Heart right ventricle (tissue), 16 donors: ENCODE measurements at regions of chr5 and their contacts with region 1.

Region 1: DNA sequence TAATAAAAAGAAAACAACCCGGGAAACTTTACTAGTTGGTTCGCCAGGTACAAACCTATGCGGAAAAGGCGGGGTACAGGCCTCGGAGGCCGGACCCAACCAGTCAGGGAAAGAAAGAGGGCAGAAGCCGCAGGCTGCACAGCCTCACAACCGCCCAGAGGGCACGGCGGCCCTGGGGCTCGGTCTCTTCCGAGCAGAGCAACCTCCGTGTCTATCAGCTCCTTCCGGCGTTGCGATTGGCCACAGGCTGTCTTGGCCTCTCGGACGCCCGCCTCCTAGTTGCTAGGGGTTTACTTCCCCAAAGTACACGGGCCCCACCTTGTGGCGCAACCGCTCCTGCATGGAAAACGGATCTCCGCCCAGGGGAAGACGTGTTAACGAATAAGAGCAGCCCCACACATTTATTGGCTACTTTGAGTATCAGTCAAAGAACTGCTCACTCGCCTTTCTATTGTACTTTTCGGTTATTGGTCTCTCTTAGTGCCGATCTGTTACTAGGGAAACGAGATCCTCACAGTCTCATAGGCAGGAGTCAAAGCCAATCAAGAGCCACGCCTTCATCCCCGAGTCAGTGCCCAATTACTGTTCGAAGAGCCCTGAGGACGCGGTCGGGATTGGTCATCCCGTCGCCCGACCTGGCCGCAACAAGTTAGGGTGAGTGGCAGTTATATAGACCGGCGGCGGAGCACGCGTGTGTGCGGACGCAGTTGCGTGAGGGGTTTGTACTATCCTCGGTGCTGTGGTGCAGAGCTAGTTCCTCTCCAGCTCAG is at the start of gene G3BP1:
- DNase-seq: peak; percentile 99 to 100
- ATAC-seq: peak; percentile 91 to 96 (median 94)
- H3K4me3 ChIP-seq: peak within 1 kb of the TSS; percentile 79 to 89 (median 82)
- H3K27ac ChIP-seq: peak within 1 kb of the TSS; percentile 94 to 100 (median 98)
- H3K4me1 ChIP-seq: peaks cover 4 to 51% (median 44%) of the 10 kb centered on the region in 9 donors
- H3K27me3 ChIP-seq: no peaks in the 10 kb centered on the region
- CTCF ChIP-seq: peak; percentile 33 to 87 (median 76)
- total RNA-seq, gene G3BP1: 91.8 to 132 (median 116) TPM

Region 2: DNA sequence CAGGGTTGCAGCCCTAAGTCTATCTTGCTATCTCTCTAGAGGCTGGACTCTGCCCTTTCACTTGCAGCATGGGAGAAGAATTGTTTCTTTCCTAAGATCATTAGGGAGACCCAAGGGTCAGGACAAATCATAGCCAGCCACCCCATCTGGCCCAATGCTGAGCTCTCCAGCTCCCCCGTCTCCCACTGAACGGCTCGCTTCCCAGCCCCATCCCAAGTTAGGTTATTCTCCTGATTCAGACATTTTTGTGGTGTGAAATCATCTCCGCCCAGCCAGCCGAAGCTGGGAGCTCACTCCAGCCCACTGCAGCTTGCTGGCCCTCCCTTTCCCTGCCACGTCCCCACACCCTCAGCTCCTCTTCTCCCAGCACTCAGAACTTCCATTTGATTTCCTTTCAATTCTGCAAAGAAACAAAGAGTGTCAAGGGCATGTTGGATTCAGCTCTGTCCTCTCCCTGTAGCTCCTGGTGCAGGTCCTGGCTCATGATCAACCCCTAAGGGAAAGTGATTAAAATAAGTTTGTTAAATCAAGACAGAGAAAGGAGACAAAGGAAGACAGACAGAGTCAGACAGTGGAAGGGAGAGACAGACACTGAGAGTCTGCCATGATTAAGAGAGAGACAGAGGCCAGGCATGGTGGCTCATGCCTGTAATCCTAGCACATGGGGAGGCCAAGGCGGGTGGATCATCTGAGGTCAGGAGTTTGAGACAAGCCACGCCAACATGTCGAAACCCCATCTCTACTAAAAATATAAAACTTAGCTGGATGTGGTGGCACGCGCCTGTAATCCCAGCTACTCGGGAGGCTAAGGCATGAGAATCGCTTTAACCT is 72.2 kb before region 1 on chr5:
- intact Hi-C with region 1: no loop called
- DNase-seq: peak; percentile 75 to 77
- ATAC-seq: peak; percentile 87 to 91 (median 89)
- H3K4me3 ChIP-seq: peak overlapping the region in 1 of 10 donors; percentile 23
- H3K27ac ChIP-seq: peak overlapping the region; percentile 29 to 89 (median 82)
- H3K4me1 ChIP-seq: peaks cover 0 to 56% (median 26%) of the 10 kb centered on the region in 9 donors
- H3K27me3 ChIP-seq: peaks cover 0 to 6% (median 0%) of the 10 kb centered on the region in 7 donors
- CTCF ChIP-seq: no peak

Region 3: DNA sequence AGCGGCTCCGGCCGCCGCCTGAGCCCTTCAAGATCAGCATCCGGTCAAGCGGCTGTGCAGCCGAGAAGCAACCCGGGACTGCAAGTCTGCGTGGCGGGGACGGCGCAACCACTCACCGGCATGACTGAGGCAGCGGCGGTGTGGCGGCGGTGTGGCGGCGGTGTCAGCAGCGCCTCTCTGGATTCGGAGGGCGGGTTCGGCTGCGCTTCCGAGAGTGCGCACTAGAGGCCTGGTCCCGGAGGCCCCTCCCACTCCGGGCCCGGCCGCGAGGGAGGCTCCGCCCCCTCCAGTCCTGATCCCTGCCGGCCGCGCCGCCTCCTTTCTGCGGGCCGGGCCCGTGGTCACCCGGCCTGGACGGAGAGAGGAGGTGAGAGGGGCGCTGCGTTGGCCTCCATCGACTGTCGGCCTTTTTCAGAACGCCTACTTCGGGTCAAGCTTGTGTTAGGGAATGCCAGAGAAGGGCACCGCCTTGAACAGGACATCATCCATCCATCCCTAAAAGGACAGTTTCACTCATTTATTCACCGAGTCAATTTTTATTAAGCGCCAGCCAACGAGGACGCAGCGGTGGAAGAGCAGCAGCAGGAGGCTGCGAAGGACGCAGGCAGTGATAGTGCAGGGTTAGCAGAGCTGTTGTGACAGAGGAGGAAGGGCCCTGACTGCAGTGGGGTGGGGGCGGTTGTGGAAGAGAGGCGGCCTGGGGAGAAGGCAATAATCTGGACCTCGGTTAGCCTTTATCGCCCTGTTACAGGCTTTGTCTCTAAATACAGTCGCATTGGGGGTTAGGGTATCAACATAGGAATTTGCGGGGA is 12.8 kb before region 1 on chr5 and contains the start of gene ATOX1:
- intact Hi-C with region 1: loop called in 1 of 10 experiments (anchors 1 kb)
- DNase-seq: peak; percentile 92 to 94
- ATAC-seq: peak; percentile 99 to 100 (median 100)
- H3K4me3 ChIP-seq: peak within 1 kb of the TSS; percentile 50 to 96 (median 84)
- H3K27ac ChIP-seq: peak within 1 kb of the TSS; percentile 41 to 90 (median 86)
- H3K4me1 ChIP-seq: peaks cover 3 to 37% (median 24%) of the 10 kb centered on the region in 9 donors
- H3K27me3 ChIP-seq: no peaks in the 10 kb centered on the region
- CTCF ChIP-seq: peak in 6 of 9 donors; percentile 11 to 44 (median 42)
- total RNA-seq, gene ATOX1: 52.5 to 77.5 (median 65.8) TPM